CD4-positive, alpha-beta T cell (primary cell): ENCODE measurements at regions of chr12 and their contacts with region 1.

Region 1: DNA sequence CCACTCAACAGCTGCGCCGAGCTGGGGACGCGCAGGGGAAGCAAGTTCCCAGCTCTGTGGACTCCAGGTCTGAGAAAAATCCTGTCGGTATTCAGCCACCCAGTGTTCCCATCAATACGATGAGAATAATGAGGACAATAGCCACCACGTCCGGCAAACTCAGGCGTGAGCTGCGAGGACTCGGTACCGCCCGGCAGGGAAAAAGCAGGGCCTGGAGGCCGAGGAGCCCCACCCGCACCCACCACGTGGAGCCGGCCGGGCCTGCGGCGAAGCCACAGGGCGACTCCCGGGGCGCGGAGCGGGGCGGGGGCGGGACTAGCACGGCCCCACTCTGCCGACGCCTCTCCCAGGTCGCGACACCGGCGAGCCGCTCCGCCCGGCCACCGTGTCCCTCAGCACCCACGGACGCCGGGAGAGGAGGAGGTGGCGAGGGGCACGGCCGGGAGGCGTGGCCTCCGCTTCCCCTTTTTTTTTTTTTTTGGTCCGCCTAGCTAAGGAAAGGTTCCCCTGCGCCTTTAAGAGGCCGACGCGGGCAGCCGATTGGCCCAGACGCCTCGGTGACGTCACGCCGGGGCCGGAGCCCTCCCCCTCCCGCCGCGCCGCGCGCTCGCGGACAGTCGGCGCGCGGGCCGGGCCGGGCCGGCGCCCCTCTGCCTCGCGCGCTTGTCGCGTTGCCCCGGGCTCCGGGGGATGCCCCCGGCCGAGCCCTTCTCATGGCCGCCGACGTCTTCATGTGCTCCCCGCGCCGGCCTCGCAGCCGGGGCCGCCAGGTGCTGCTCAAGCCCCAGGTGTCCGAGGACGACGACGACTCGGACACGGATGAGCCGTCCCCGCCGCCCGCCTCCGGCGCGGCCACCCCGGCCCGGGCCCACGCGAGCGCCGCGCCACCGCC is at the start of gene MLXIP:
- DNase-seq: peak; percentile 71 to 94 (median 87)
- ATAC-seq: peak; percentile 68
- H3K4me3 ChIP-seq: peak within 1 kb of the TSS; percentile 96
- H3K4me3 Mint-ChIP-seq: peak within 1 kb of the TSS; percentile 84
- H3K27ac ChIP-seq: peak within 1 kb of the TSS; percentile 65 to 76
- H3K27ac Mint-ChIP-seq: peak within 1 kb of the TSS; percentile 84
- H3K4me1 ChIP-seq: peaks cover 54% of the 10 kb centered on the region
- H3K4me1 Mint-ChIP-seq: peaks cover 47% of the 10 kb centered on the region
- H3K27me3 ChIP-seq: no peaks in the 10 kb centered on the region
- H3K27me3 Mint-ChIP-seq: no peaks in the 10 kb centered on the region
- CTCF ChIP-seq: no peak
- total RNA-seq, gene MLXIP: 98.0 to 99.3 TPM

Region 2: DNA sequence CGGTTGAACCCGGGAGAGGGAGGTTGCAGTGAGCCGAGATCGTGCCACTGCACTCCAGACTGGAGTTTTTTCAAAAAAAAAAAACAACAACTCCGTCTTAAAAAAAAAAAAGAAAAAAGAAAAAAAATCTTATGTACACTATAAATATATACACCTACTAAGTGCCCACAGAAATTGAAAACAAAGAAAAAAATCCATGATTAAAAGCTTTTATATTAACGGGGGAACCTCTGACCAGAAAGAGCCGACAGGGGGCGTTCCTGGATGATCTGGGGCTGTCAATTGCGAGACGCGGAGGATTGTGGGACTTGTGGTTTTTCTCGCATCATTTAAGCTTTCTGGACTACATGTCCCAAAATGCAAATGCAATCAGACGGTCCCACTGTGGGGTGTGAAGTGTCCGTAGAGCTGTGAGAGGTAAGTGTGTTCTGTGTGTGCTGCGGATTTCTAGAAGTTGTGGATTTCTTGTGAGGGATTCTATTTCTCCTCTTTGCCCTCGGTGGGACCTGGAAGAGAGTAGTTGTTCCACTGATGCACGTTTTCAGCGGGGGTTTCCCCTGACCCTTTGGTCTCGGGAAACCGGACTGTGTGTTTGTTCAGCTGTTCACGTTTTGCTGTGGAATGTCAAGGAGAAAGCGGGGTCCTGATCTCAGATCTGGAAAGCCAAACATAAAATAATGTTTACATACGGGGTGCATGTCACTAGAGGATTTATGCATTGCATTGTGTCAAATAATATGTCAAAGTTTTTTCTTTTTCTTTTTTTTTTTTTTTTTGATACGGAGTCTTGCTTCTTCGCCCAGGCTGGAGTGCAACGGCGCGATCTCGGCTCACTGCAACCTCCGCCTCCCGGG is 1776.2 kb before region 1 on chr12 and contains the start of gene SIRT4:
- CTCF ChIA-PET with region 1: no interaction called
- POLR2A ChIA-PET with region 1: no interaction called
- intact Hi-C with region 1: loop called in 1 of 2 experiments (anchors 10 kb)
- DNase-seq: peak; percentile 77 to 96 (median 86)
- ATAC-seq: peak; percentile 99
- H3K4me3 ChIP-seq: peak within 1 kb of the TSS; percentile 97
- H3K4me3 Mint-ChIP-seq: peak within 1 kb of the TSS; percentile 97
- H3K27ac ChIP-seq: peak within 1 kb of the TSS in 1 of 2 donors; percentile 60
- H3K27ac Mint-ChIP-seq: peak within 1 kb of the TSS; percentile 79
- H3K4me1 ChIP-seq: peaks cover 13% of the 10 kb centered on the region
- H3K4me1 Mint-ChIP-seq: peaks cover 11% of the 10 kb centered on the region
- H3K27me3 ChIP-seq: no peaks in the 10 kb centered on the region
- H3K27me3 Mint-ChIP-seq: no peaks in the 10 kb centered on the region
- CTCF ChIP-seq: peak; percentile 78
- total RNA-seq, gene SIRT4: 0.59 TPM in 1 of 2 experiments, not detected in the other

Region 3: DNA sequence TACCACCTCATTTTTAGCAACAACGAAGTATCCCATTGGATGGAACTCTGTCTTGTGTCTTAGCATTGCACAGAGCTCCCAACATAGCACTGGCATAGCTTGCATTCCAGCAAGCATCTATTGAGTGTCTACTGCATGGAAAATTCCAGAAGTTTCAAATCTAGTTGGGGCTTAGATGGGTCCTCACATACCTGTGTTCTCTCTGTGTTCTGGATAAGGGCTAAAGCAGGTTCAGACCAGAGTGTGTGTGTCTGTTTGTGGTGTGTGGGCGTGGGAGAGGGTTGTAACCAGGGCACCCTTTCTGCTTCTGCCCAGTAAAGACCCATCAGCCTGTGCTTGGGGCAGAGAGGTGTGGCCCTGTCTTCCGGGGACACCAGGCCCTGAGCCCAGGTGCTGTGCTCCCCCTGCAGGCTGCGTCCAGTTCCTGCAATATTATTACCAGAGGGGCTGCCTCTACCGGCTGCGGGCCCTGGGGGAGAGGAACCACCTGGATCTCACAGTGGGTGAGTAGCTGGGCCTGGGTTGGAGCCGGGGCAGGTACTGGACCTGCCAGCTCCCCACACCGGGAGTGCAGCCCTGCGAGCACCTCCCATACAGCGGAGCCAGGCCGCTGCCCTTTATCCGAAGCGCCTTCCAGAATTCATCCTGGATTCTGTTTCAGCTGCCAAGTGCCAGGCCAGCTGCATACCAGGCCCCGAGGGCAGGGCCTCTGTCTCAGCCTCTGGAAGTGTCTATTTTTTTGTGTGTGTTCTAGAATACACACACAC is 305.2 kb before region 1 on chr12:
- CTCF ChIA-PET with region 1: no interaction called
- POLR2A ChIA-PET with region 1: no interaction called
- intact Hi-C with region 1: no loop called
- DNase-seq: peak; percentile 67 to 89 (median 76)
- ATAC-seq: peak; percentile 84
- H3K4me3 ChIP-seq: no peak overlapping the region
- H3K4me3 Mint-ChIP-seq: no peak overlapping the region
- H3K27ac ChIP-seq: no peak overlapping the region
- H3K27ac Mint-ChIP-seq: no peak overlapping the region
- H3K4me1 ChIP-seq: peaks cover 26% of the 10 kb centered on the region
- H3K4me1 Mint-ChIP-seq: peaks cover 13% of the 10 kb centered on the region
- H3K27me3 ChIP-seq: no peaks in the 10 kb centered on the region
- H3K27me3 Mint-ChIP-seq: no peaks in the 10 kb centered on the region
- CTCF ChIP-seq: peak; percentile 91

Region 4: DNA sequence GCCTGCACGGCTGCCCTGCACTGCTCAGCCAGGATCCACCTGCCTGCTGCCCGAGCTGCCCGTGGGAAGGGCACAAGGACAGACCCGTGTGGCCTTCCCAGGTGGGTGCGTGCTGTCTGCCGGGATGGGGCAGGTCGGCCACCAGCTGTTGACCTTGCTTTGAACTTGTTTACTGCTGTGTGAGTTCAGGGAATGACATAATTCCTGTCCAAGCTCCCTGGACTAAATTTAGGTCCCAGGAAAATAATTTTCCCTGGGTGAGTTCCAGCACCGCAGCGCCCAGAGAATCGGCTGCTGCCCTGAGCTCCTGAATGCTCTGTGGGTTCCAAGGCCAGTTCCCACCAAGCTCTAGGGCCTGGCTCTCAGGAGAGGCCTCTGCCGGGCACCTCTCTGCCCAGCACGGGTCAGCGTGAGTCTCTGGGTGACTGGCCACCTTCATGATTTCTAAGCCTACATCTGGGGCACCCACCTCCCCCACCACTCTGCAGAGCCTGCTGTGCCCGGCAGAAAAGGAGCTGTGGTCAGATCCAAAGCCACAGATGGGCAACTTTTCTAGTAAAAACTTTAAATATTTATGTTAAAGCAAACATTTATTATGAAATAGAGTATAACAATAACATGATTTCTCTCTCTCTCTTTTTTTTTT is 27.0 kb before region 1 on chr12:
- CTCF ChIA-PET with region 1: interaction called, 11 read pairs
- POLR2A ChIA-PET with region 1: interaction called, 8 read pairs
- intact Hi-C with region 1: loop called in 1 of 2 experiments (anchors 2 kb)
- DNase-seq: no peak
- ATAC-seq: no peak
- H3K4me3 ChIP-seq: no peak overlapping the region
- H3K4me3 Mint-ChIP-seq: no peak overlapping the region
- H3K27ac ChIP-seq: no peak overlapping the region
- H3K27ac Mint-ChIP-seq: no peak overlapping the region
- H3K4me1 ChIP-seq: peaks cover 9% of the 10 kb centered on the region
- H3K4me1 Mint-ChIP-seq: peaks cover 4% of the 10 kb centered on the region
- H3K27me3 ChIP-seq: no peaks in the 10 kb centered on the region
- H3K27me3 Mint-ChIP-seq: no peaks in the 10 kb centered on the region
- CTCF ChIP-seq: no peak

Region 5: GRCh38 chr12:122064025-122064777 is 14.2 kb before region 1 on chr12:
- CTCF ChIA-PET with region 1: no interaction called
- POLR2A ChIA-PET with region 1: interaction called, 16 read pairs
- intact Hi-C with region 1: no loop called
- DNase-seq: peak in 5 of 14 experiments; percentile 22 to 67 (median 50)
- ATAC-seq: peak; percentile 84
- H3K4me3 ChIP-seq: no peak overlapping the region
- H3K4me3 Mint-ChIP-seq: no peak overlapping the region
- H3K27ac ChIP-seq: no peak overlapping the region
- H3K27ac Mint-ChIP-seq: no peak overlapping the region
- H3K4me1 ChIP-seq: peaks cover 19% of the 10 kb centered on the region
- H3K4me1 Mint-ChIP-seq: peaks cover 17% of the 10 kb centered on the region
- H3K27me3 ChIP-seq: no peaks in the 10 kb centered on the region
- H3K27me3 Mint-ChIP-seq: no peaks in the 10 kb centered on the region
- CTCF ChIP-seq: no peak

Region 6: GRCh38 chr12:122097927-122098756 is 19.8 kb after region 1 on chr12:
- CTCF ChIA-PET with region 1: interaction called, 8 read pairs
- POLR2A ChIA-PET with region 1: interaction called, 110 read pairs
- intact Hi-C with region 1: loop called in 1 of 2 experiments (anchors 2 kb)
- DNase-seq: peak in 1 of 14 experiments; percentile 34
- ATAC-seq: peak; percentile 33
- H3K4me3 ChIP-seq: no peak overlapping the region
- H3K4me3 Mint-ChIP-seq: peak overlapping the region; percentile 48
- H3K27ac ChIP-seq: peak overlapping the region; percentile 46 to 53
- H3K27ac Mint-ChIP-seq: peak overlapping the region; percentile 87
- H3K4me1 ChIP-seq: peaks cover 68% of the 10 kb centered on the region
- H3K4me1 Mint-ChIP-seq: peaks cover 67% of the 10 kb centered on the region
- H3K27me3 ChIP-seq: no peaks in the 10 kb centered on the region
- H3K27me3 Mint-ChIP-seq: no peaks in the 10 kb centered on the region
- CTCF ChIP-seq: no peak

Region 7: DNA sequence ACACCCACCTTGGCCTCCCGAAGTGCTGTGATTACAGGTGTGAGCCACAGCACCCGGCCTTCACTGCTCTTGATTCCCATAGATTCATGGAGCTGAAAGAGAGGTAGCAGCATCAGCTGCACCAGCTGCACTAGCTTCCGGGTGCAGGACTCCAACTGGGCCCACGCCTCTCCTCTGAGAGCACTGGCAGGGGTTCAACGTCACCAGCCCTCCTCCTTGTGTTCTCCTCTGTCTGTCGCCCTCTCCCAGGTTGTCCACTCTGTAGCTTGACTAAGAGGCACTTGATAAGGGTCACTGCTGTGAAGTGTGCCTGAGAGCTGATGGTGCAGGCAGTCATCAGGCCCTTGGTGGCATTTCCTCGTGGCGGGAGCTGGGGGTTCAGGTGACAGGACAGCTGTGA is 28.5 kb after region 1 on chr12:
- CTCF ChIA-PET with region 1: interaction called, 8 read pairs
- POLR2A ChIA-PET with region 1: interaction called, 110 read pairs
- intact Hi-C with region 1: no loop called
- DNase-seq: no peak
- ATAC-seq: no peak
- H3K4me3 ChIP-seq: no peak overlapping the region
- H3K4me3 Mint-ChIP-seq: no peak overlapping the region
- H3K27ac ChIP-seq: no peak overlapping the region
- H3K27ac Mint-ChIP-seq: peak overlapping the region; percentile 36
- H3K4me1 ChIP-seq: peaks cover 57% of the 10 kb centered on the region
- H3K4me1 Mint-ChIP-seq: peaks cover 74% of the 10 kb centered on the region
- H3K27me3 ChIP-seq: no peaks in the 10 kb centered on the region
- H3K27me3 Mint-ChIP-seq: no peaks in the 10 kb centered on the region
- CTCF ChIP-seq: no peak

Region 8: DNA sequence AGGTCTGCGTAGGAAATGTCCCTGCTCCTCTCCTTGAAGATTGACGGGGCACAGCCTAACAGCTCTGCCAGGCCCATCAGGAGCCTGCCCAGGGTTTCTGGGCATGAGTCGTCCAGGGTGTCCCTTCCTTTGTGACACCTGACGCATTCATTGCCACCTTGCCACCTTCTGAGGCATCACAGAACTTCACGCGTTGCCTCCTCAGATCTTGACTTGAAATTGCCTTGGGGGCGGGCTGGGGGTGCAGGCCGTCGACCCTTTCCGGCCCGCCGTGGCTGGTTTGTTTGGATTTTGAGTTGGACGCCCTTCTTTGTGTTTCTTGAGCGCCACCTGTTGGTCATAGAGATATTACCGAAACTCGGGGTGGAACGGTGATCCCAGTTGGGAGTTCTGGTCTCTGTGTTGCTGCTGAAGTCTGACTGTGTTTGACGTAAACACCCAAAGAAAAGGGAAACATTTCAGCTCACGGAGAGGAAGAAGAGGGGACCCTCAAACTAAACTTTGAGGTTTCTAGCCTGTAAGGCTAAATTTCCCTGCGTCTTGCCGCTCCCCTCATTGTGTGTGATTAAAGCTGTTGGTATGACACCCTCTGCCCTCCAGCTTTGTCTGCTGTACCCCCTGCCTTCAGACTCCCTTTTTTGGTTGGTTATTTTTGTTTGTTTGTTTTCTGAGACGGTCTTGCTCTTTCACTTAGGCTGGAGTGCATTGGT is 44.8 kb after region 1 on chr12:
- CTCF ChIA-PET with region 1: interaction called, 4 read pairs
- POLR2A ChIA-PET with region 1: interaction called, 7 read pairs
- intact Hi-C with region 1: loop called (anchors 2 to 5 kb)
- DNase-seq: peak; percentile 53 to 84 (median 66)
- ATAC-seq: peak; percentile 79
- H3K4me3 ChIP-seq: no peak overlapping the region
- H3K4me3 Mint-ChIP-seq: peak overlapping the region; percentile 68
- H3K27ac ChIP-seq: no peak overlapping the region
- H3K27ac Mint-ChIP-seq: peak overlapping the region; percentile 69
- H3K4me1 ChIP-seq: peaks cover 19% of the 10 kb centered on the region
- H3K4me1 Mint-ChIP-seq: peaks cover 39% of the 10 kb centered on the region
- H3K27me3 ChIP-seq: no peaks in the 10 kb centered on the region
- H3K27me3 Mint-ChIP-seq: no peaks in the 10 kb centered on the region
- CTCF ChIP-seq: peak; percentile 95